Dendritic cell treated with granulocyte-macrophage colony-stimulating factor and Interleukin-4, amounts not matched to agents 40 ng/mL and 50 ng/mL, for 4 days (primary cell): ENCODE measurements at regions of chr3 and their contacts with region 1.

Region 1: GRCh38 chr3:24237971-24238767 is 256.5 kb downstream of the THRB start:
- H3K4me3 Mint-ChIP-seq: no peak overlapping the region
- H3K27ac Mint-ChIP-seq: no peak overlapping the region
- H3K4me1 Mint-ChIP-seq: no peaks in the 10 kb centered on the region
- H3K27me3 Mint-ChIP-seq: peaks cover 3% of the 10 kb centered on the region

Region 2: GRCh38 chr3:23481561-23482278 is 756.4 kb before region 1 on chr3:
- intact Hi-C with region 1: no loop called
- H3K4me3 Mint-ChIP-seq: no peak overlapping the region
- H3K27ac Mint-ChIP-seq: no peak overlapping the region
- H3K4me1 Mint-ChIP-seq: no peaks in the 10 kb centered on the region
- H3K27me3 Mint-ChIP-seq: no peaks in the 10 kb centered on the region

Region 3: GRCh38 chr3:23888617-23889228 is 349.4 kb before region 1 on chr3:
- intact Hi-C with region 1: loop called (anchors 2 kb)
- H3K4me3 Mint-ChIP-seq: no peak overlapping the region
- H3K27ac Mint-ChIP-seq: no peak overlapping the region
- H3K4me1 Mint-ChIP-seq: peaks cover 6% of the 10 kb centered on the region
- H3K27me3 Mint-ChIP-seq: no peaks in the 10 kb centered on the region

Region 4: DNA sequence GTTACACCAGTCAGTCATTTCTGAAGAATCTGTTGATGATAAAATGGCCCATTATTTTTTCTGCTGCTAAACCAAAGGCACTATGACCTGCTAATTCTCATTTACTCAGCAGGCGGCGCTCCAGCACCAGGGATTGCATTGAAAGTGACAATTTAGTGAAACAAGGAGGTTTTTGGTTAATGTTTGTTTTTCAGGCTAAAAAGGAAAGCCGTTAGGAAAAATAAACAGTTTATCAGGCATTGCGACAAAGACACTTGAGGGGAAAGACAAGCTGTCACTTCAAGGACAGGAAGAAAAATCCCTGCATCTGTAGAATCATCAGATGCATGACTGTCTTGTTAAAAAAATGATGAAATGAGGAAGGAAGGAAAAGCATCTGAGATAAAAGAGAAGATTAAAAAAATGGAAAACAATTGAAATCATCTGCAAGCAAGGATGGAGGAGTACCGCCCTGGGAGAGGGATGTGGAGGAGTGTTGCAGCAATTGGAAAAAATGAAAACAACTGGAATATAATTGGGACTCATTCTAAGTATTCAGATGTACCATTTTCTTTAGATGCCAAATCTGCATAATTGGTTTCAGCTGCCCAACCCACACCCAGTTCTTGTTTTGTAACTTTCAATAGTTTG is 239.0 kb before region 1 on chr3:
- intact Hi-C with region 1: loop called (anchors 1 kb)
- H3K4me3 Mint-ChIP-seq: no peak overlapping the region
- H3K27ac Mint-ChIP-seq: no peak overlapping the region
- H3K4me1 Mint-ChIP-seq: peaks cover 5% of the 10 kb centered on the region
- H3K27me3 Mint-ChIP-seq: peaks cover 5% of the 10 kb centered on the region

Region 5: GRCh38 chr3:24042174-24043059 is 195.8 kb before region 1 on chr3:
- intact Hi-C with region 1: no loop called
- H3K4me3 Mint-ChIP-seq: no peak overlapping the region
- H3K27ac Mint-ChIP-seq: no peak overlapping the region
- H3K4me1 Mint-ChIP-seq: no peaks in the 10 kb centered on the region
- H3K27me3 Mint-ChIP-seq: no peaks in the 10 kb centered on the region

Region 6: GRCh38 chr3:24389108-24390090 is 151.2 kb after region 1 on chr3:
- intact Hi-C with region 1: no loop called
- H3K4me3 Mint-ChIP-seq: no peak overlapping the region
- H3K27ac Mint-ChIP-seq: no peak overlapping the region
- H3K4me1 Mint-ChIP-seq: no peaks in the 10 kb centered on the region
- H3K27me3 Mint-ChIP-seq: no peaks in the 10 kb centered on the region